Activated CD8-positive, alpha-beta T cell treated with anti-CD3 and anti-CD28 coated beads, Interleukin-2, amount 10 ng/mL, durations not matched to agents 7 days and 5 days (primary cell): ENCODE measurements at regions of chr1 and their contacts with region 1.

Region 1: GRCh38 chr1:65075123-65075976 is 72.7 kb upstream of the AK4 start:
- DNase-seq: peak; percentile 80
- ATAC-seq: peak; percentile 97
- H3K4me3 Mint-ChIP-seq: no peak overlapping the region
- H3K27ac Mint-ChIP-seq: no peak overlapping the region
- H3K4me1 Mint-ChIP-seq: peaks cover 3% of the 10 kb centered on the region
- H3K27me3 Mint-ChIP-seq: peaks cover 7% of the 10 kb centered on the region

Region 2: DNA sequence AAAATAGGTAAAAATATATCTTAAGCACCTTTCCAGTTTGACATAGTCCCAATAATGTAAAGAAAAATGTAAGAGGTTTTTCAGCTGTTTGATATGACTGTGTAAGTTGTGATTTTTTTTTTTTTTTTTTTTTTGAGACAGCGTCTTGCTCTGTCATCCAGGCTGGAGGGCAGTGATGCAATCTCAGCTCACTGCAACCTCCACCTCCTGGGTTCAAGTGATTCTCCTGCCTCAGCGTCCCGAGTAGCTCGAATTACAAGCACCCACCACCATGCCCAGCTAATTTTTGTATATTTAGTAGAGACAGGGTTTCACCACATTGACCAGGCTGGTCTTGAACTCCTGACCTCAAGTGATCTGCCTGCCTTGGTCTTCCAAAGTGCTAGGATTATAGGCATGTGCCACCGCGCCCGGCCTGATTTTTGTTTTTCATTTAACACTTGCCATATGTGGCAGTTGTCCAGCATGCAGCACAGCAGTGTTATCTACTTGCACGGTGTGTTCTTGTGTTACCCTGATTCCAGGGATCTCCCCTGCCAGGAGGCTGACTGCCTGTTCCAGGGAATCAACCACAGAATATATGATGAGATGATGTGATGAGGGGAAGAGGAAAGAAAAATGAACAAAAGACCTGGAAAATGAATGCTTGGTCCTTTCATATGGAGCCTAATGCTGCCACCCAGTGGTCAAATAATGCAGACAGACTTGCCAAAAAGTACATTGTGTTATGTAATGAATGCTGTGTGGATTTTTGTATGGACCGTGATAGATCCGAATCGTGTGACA is 251.5 kb before region 1 on chr1:
- CTCF ChIA-PET with region 1: interaction called, 12 read pairs
- POLR2A ChIA-PET with region 1: no interaction called
- DNase-seq: peak; percentile 75
- ATAC-seq: peak; percentile 62
- H3K4me3 Mint-ChIP-seq: no peak overlapping the region
- H3K27ac Mint-ChIP-seq: no peak overlapping the region
- H3K4me1 Mint-ChIP-seq: peaks cover 23% of the 10 kb centered on the region
- H3K27me3 Mint-ChIP-seq: peaks cover 6% of the 10 kb centered on the region

Region 3: DNA sequence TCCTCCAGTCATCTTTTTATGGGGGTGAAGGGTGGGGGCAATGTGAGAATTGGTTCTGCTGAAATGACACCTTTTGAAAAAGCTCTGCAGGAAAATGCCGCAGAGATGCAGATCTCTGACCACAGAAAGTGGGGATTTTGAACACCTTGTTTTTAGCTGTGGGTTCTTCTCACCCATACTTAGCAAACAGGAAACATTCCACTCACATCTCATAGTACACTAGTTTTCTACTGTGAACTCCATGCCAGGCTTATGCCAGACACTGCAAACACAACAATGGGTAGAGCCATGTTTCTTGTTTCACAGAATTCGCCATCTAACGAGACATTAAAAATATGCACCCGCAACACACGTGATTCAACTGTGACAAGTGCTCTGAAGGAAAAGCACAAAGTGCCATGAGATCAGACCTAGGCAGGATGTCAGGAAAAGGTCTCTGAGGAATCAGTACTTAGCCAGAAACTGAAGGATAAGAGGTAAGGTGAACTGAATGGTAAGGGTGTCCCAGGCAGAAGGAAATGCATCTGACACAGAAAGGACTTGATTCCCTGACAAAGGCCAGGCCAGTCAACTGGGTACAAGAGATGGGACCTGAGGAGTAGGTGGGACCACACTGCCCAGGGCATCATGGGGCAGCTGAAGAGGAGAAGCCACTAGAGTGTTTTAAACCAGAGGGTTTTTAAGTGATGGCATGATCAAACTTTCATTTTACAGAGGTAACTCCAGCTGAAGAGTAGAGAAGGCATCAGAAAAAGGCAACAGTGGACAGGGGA is 25.2 kb before region 1 on chr1:
- CTCF ChIA-PET with region 1: interaction called, 14 read pairs
- POLR2A ChIA-PET with region 1: interaction called, 3 read pairs
- DNase-seq: no peak
- ATAC-seq: peak; percentile 55
- H3K4me3 Mint-ChIP-seq: peak overlapping the region; percentile 34
- H3K27ac Mint-ChIP-seq: peak overlapping the region; percentile 31
- H3K4me1 Mint-ChIP-seq: peaks cover 19% of the 10 kb centered on the region
- H3K27me3 Mint-ChIP-seq: no peaks in the 10 kb centered on the region

Region 4: GRCh38 chr1:65059930-65060538 is 15.3 kb before region 1 on chr1:
- CTCF ChIA-PET with region 1: interaction called, 95 read pairs
- POLR2A ChIA-PET with region 1: interaction called, 3 read pairs
- DNase-seq: no peak
- ATAC-seq: no peak
- H3K4me3 Mint-ChIP-seq: no peak overlapping the region
- H3K27ac Mint-ChIP-seq: no peak overlapping the region
- H3K4me1 Mint-ChIP-seq: peaks cover 10% of the 10 kb centered on the region
- H3K27me3 Mint-ChIP-seq: no peaks in the 10 kb centered on the region